Motor neuron (in vitro differentiated cells): ENCODE measurements at regions of chr12 and their contacts with region 1.

Region 1: GRCh38 chr12:105427883-105428282 is 97.4 kb downstream of the C12orf75 start:
- ATAC-seq: no peak
- H3K4me3 ChIP-seq: no peak overlapping the region
- H3K27ac ChIP-seq: no peak overlapping the region
- H3K4me1 ChIP-seq: no peaks in the 10 kb centered on the region

Region 2: DNA sequence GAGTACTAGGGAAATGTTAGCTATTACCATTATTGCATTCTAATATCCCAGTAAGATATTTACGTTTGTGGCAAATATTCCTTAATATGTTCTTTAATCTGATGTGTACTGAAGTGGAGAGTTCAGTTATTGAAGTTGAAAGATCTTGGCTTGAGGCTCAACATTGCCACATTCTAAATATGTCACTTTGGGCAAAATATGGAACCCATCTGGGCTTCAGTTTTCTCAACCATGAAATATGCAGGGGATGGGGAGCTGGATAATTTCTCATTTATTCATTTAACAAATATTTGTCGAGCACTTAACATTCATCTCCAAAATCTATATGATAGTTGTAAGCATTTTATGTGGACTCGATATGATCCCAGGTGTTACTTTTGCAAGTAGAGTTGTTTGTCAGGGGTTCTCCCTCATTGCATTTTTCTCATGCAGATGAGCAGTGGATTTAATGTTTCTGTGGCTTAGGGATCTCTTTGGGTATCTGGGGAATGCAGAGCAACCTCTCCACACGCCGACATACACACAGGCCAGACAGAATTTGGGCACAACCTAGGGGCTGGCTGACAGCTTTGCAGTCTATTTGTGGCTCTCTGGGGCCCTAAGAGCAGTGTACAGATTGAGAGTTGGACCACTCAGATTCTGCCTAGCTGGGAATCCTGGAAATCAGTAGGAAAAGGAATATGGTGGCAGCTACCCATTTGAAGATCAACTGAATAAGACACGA is 165.3 kb before region 1 on chr12:
- in situ Hi-C with region 1: no loop called
- ATAC-seq: no peak
- H3K4me3 ChIP-seq: no peak overlapping the region
- H3K27ac ChIP-seq: no peak overlapping the region
- H3K4me1 ChIP-seq: peaks cover 5 to 7% of the 10 kb centered on the region in 2 donors

Region 3: GRCh38 chr12:105330283-105330930 is 97.5 kb before region 1 on chr12 and contains the start of gene C12orf75:
- in situ Hi-C with region 1: no loop called
- ATAC-seq: peak; percentile 87 to 98 (median 97)
- H3K4me3 ChIP-seq: peak within 1 kb of the TSS; percentile 63 to 85 (median 81)
- H3K27ac ChIP-seq: peak within 1 kb of the TSS in 1 of 2 donors; percentile 11
- H3K4me1 ChIP-seq: peaks cover 3 to 17% of the 10 kb centered on the region in 2 donors
- total RNA-seq, gene C12orf75: 5.1 to 55.8 (median 17.8) TPM

Region 4: GRCh38 chr12:105676694-105677093 is 248.8 kb after region 1 on chr12:
- in situ Hi-C with region 1: loop called in 1 of 9 experiments (anchors 25 kb)
- ATAC-seq: no peak
- H3K4me3 ChIP-seq: no peak overlapping the region
- H3K27ac ChIP-seq: no peak overlapping the region
- H3K4me1 ChIP-seq: peaks cover 0 to 7% of the 10 kb centered on the region in 2 donors